Activated CD8-positive, alpha-beta T cell treated with anti-CD3 and anti-CD28 coated beads for 36 hours (primary cell): ENCODE measurements at regions of chr21 and their contacts with region 1.

Region 1: GRCh38 chr21:25573409-25574206 is 33.7 kb downstream of the MRPL39 start:
- DNase-seq: peak; percentile 87
- ATAC-seq: peak; percentile 45
- H3K4me3 Mint-ChIP-seq: peak overlapping the region; percentile 83
- H3K27ac Mint-ChIP-seq: peak overlapping the region; percentile 97
- H3K4me1 Mint-ChIP-seq: peaks cover 70% of the 10 kb centered on the region
- H3K27me3 Mint-ChIP-seq: no peaks in the 10 kb centered on the region
- CTCF ChIP-seq: no peak

Region 2: DNA sequence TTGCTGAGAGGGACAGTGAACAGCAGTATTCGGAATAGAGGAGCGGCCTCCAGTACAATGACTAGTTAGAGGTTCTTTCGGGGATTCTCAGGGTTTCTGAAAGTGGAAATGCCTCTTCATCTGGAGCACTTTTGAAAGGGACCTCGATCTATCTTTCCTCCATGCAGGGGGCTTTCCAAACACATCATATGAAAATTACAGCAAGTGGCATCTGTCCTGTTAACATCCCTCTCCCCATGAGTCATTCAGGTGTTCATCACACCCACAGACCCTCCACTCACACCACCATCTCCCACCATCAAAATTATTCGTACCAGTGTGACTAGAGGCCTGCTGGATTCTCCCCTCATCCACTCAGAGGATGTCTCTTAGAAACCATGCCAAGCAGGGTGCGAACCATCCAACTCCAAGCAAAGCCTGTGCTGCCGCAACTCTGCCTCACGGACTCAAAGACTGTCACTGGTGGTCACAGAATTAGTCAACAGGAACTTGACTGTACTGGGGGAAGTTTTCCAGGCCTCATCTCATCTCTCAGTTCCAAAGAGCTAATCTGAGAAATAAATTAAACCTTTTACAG is 177.4 kb before region 1 on chr21:
- CTCF ChIA-PET with region 1: interaction called, 3 read pairs
- POLR2A ChIA-PET with region 1: interaction called, 12 read pairs
- intact Hi-C with region 1: no loop called
- DNase-seq: peak; percentile 91
- ATAC-seq: peak; percentile 96
- H3K4me3 Mint-ChIP-seq: peak overlapping the region; percentile 25
- H3K27ac Mint-ChIP-seq: peak overlapping the region; percentile 84
- H3K4me1 Mint-ChIP-seq: peaks cover 27% of the 10 kb centered on the region
- H3K27me3 Mint-ChIP-seq: no peaks in the 10 kb centered on the region
- CTCF ChIP-seq: no peak

Region 3: GRCh38 chr21:25457411-25457810 is 116.2 kb before region 1 on chr21:
- CTCF ChIA-PET with region 1: no interaction called
- POLR2A ChIA-PET with region 1: interaction called, 117 read pairs
- intact Hi-C with region 1: loop called (anchors 1 kb)
- DNase-seq: no peak
- ATAC-seq: peak; percentile 47
- H3K4me3 Mint-ChIP-seq: peak overlapping the region; percentile 69
- H3K27ac Mint-ChIP-seq: peak overlapping the region; percentile 92
- H3K4me1 Mint-ChIP-seq: peaks cover 83% of the 10 kb centered on the region
- H3K27me3 Mint-ChIP-seq: no peaks in the 10 kb centered on the region
- CTCF ChIP-seq: no peak

Region 4: DNA sequence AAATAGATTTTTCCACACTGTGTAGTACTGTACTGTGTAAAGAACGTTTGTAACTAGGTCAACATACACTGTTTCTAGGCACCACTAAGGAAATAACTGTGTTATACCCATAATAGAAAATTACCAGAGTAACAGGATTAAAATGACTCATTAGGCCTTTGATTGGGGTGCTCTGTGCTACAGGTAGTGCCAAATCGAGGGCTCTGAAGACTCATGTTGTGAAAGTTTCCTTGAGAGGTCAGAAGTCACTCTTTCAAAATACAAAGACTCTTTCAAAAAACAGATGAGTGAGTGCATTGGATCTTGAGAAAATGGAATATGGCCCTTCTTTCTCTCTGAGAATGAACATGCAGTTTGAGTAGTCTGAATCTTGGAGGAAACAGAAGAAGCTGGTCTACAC is 109.3 kb before region 1 on chr21:
- CTCF ChIA-PET with region 1: no interaction called
- POLR2A ChIA-PET with region 1: interaction called, 117 read pairs
- intact Hi-C with region 1: no loop called
- DNase-seq: peak; percentile 48
- ATAC-seq: peak; percentile 74
- H3K4me3 Mint-ChIP-seq: peak overlapping the region; percentile 49
- H3K27ac Mint-ChIP-seq: peak overlapping the region; percentile 98
- H3K4me1 Mint-ChIP-seq: peaks cover 76% of the 10 kb centered on the region
- H3K27me3 Mint-ChIP-seq: no peaks in the 10 kb centered on the region
- CTCF ChIP-seq: no peak

Region 5: DNA sequence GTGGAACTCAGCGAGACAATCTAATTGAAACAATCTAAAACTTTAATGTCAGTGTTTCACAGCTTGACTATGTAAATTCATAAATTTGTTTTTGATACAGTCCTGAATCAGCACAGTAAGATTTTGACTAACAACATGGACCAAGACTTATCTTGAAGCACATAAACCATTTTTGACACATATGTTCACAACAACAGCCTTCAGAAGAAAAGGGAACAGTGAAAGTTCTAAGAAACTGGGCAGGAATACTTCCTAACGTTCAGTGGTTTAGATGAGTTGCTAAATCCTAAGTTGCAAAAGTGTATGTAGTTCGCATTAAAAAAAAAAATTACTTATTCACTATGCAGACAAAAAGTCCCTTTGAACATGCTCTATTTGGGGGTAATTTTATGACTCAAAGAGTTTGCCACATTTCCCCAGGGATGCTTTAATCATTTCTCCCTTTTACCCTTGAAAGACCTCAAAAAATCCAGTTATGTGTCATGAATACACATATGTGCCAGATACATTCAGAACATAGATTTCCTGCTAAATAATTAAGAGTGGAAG is 86.5 kb before region 1 on chr21:
- CTCF ChIA-PET with region 1: interaction called, 3 read pairs
- POLR2A ChIA-PET with region 1: interaction called, 38 read pairs
- intact Hi-C with region 1: no loop called
- DNase-seq: no peak
- ATAC-seq: peak; percentile 75
- H3K4me3 Mint-ChIP-seq: peak overlapping the region; percentile 54
- H3K27ac Mint-ChIP-seq: peak overlapping the region; percentile 89
- H3K4me1 Mint-ChIP-seq: peaks cover 77% of the 10 kb centered on the region
- H3K27me3 Mint-ChIP-seq: no peaks in the 10 kb centered on the region
- CTCF ChIP-seq: no peak

Region 6: GRCh38 chr21:25496825-25497482 is 76.7 kb before region 1 on chr21:
- CTCF ChIA-PET with region 1: no interaction called
- POLR2A ChIA-PET with region 1: interaction called, 38 read pairs
- intact Hi-C with region 1: no loop called
- DNase-seq: no peak
- ATAC-seq: no peak
- H3K4me3 Mint-ChIP-seq: no peak overlapping the region
- H3K27ac Mint-ChIP-seq: no peak overlapping the region
- H3K4me1 Mint-ChIP-seq: peaks cover 40% of the 10 kb centered on the region
- H3K27me3 Mint-ChIP-seq: no peaks in the 10 kb centered on the region
- CTCF ChIP-seq: no peak

Region 7: GRCh38 chr21:25507522-25507921 is 66.1 kb before region 1 on chr21:
- CTCF ChIA-PET with region 1: interaction called, 7 read pairs
- POLR2A ChIA-PET with region 1: interaction called, 179 read pairs
- intact Hi-C with region 1: no loop called
- DNase-seq: peak; percentile 46
- ATAC-seq: peak; percentile 43
- H3K4me3 Mint-ChIP-seq: peak overlapping the region; percentile 50
- H3K27ac Mint-ChIP-seq: peak overlapping the region; percentile 55
- H3K4me1 Mint-ChIP-seq: peaks cover 63% of the 10 kb centered on the region
- H3K27me3 Mint-ChIP-seq: no peaks in the 10 kb centered on the region
- CTCF ChIP-seq: peak; percentile 28

Region 8: GRCh38 chr21:25539606-25540005 is 34.0 kb before region 1 on chr21:
- CTCF ChIA-PET with region 1: no interaction called
- POLR2A ChIA-PET with region 1: no interaction called
- intact Hi-C with region 1: no loop called
- DNase-seq: no peak
- ATAC-seq: no peak
- H3K4me3 Mint-ChIP-seq: no peak overlapping the region
- H3K27ac Mint-ChIP-seq: no peak overlapping the region
- H3K4me1 Mint-ChIP-seq: peaks cover 3% of the 10 kb centered on the region
- H3K27me3 Mint-ChIP-seq: no peaks in the 10 kb centered on the region
- CTCF ChIP-seq: no peak